ENCODE measurements at regions of chr3 and their contacts with region 1.

Region 1: GRCh38 chr3:168847291-168847883 is 751.7 kb upstream of the GOLIM4 start:
- DNase-seq: no peak
- H3K4me3 ChIP-seq: no peak overlapping the region
- H3K27ac ChIP-seq: no peak overlapping the region
- H3K4me1 ChIP-seq: no peaks in the 10 kb centered on the region
- H3K27me3 ChIP-seq: no peaks in the 10 kb centered on the region
- CTCF ChIP-seq: peak; percentile 42

Region 2: GRCh38 chr3:168511428-168512014 is 335.9 kb before region 1 on chr3:
- intact Hi-C with region 1: loop called (anchors 5 kb)
- DNase-seq: no peak
- H3K4me3 ChIP-seq: no peak overlapping the region
- H3K27ac ChIP-seq: no peak overlapping the region
- H3K4me1 ChIP-seq: no peaks in the 10 kb centered on the region
- H3K27me3 ChIP-seq: no peaks in the 10 kb centered on the region
- CTCF ChIP-seq: peak; percentile 28

Region 3: DNA sequence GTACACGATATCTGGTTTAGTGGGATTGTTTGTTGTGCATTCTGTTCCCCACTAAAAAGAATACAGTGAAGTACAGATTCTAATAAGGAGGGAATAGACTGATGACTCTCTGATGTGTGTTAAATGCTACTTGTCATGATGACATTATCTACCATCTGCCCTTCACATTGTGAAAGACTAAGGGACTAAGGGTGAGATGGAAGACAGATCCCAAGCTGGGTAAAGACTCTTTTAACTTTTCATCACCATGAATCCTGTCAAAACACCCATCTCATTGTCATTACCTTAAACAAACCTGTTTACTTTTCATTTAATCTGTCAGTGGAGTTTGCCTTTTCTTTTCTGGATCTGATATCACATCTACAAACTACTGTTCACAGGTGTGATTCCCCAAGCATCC is 110.0 kb after region 1 on chr3:
- intact Hi-C with region 1: no loop called
- DNase-seq: no peak
- H3K4me3 ChIP-seq: no peak overlapping the region
- H3K27ac ChIP-seq: no peak overlapping the region
- H3K4me1 ChIP-seq: no peaks in the 10 kb centered on the region
- H3K27me3 ChIP-seq: no peaks in the 10 kb centered on the region
- CTCF ChIP-seq: no peak

Region 4: GRCh38 chr3:169002689-169003088 is 155.3 kb after region 1 on chr3:
- intact Hi-C with region 1: no loop called
- DNase-seq: no peak
- H3K4me3 ChIP-seq: no peak overlapping the region
- H3K27ac ChIP-seq: no peak overlapping the region
- H3K4me1 ChIP-seq: no peaks in the 10 kb centered on the region
- H3K27me3 ChIP-seq: no peaks in the 10 kb centered on the region
- CTCF ChIP-seq: no peak

Region 5: DNA sequence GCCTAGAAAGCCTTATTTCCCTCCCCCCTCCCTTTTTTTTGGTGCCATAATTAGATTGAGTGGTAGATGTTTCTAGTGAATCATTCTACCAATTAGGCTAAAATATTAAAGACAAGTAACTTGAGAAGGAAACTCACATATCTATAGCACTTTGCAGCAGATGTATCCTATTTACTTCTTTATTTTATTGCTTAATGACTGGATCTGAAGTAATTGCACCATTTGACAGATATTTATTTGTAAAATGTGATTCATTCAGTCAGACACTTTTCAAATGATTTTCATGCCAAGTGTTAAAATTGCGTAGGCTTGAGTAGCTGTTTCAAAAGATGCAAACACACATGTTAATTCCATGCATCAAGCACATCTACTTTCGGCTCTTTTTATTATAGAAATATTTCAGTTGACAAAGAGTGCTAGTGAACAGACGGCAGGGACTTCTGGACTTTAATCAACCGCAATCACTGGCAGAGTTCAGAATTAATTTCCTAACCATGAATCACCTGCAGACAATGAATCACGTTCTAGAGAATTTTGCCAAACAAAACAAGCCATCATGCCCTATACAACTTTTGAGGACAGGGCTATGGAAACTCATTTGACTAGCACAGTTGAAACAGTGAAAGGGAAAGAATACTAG is 179.3 kb after region 1 on chr3:
- intact Hi-C with region 1: no loop called
- DNase-seq: no peak
- H3K4me3 ChIP-seq: no peak overlapping the region
- H3K27ac ChIP-seq: no peak overlapping the region
- H3K4me1 ChIP-seq: peaks cover 3% of the 10 kb centered on the region
- H3K27me3 ChIP-seq: no peaks in the 10 kb centered on the region
- CTCF ChIP-seq: no peak